OCI-LY7 (cell line): ENCODE measurements at regions of chr9 and their contacts with region 1.

Region 1: GRCh38 chr9:71524996-71525580 is 243.2 kb downstream of the CEMIP2 start:
- DNase-seq: no peak
- H3K4me3 ChIP-seq: no peak overlapping the region
- H3K27ac ChIP-seq: no peak overlapping the region
- H3K4me1 ChIP-seq: no peaks in the 10 kb centered on the region
- CTCF ChIP-seq: no peak

Region 2: GRCh38 chr9:71285191-71285656 is 239.9 kb before region 1 on chr9:
- CTCF ChIA-PET with region 1: no interaction called
- POLR2A ChIA-PET with region 1: no interaction called
- intact Hi-C with region 1: loop called (anchors 10 kb)
- DNase-seq: peak; percentile 63
- H3K4me3 ChIP-seq: no peak overlapping the region
- H3K27ac ChIP-seq: no peak overlapping the region
- H3K4me1 ChIP-seq: no peaks in the 10 kb centered on the region
- CTCF ChIP-seq: peak; percentile 91

Region 3: GRCh38 chr9:71496310-71496709 is 28.8 kb before region 1 on chr9:
- CTCF ChIA-PET with region 1: no interaction called
- POLR2A ChIA-PET with region 1: no interaction called
- intact Hi-C with region 1: no loop called
- DNase-seq: no peak
- H3K4me3 ChIP-seq: no peak overlapping the region
- H3K27ac ChIP-seq: no peak overlapping the region
- H3K4me1 ChIP-seq: no peaks in the 10 kb centered on the region
- CTCF ChIP-seq: no peak

Region 4: DNA sequence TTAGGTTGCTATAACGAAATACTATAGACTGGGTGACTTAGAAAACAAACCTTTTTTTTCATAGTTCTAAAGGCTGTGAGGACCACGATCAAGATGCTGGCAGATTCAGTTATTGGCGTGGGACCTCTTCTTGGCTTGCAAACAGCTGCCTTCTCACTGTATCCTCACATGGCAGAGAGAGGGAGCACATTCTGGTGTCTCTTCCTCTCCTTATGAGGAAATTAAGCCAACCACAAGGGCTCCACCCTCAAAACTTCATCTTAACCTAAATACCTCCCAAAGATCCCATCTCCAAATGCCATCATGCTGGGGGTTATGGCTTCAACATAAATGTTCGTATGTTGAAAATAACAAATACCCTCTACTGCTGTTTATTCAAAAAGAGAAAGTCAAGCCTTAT is 46.1 kb after region 1 on chr9:
- CTCF ChIA-PET with region 1: no interaction called
- POLR2A ChIA-PET with region 1: no interaction called
- intact Hi-C with region 1: no loop called
- DNase-seq: no peak
- H3K4me3 ChIP-seq: no peak overlapping the region
- H3K27ac ChIP-seq: no peak overlapping the region
- H3K4me1 ChIP-seq: no peaks in the 10 kb centered on the region
- CTCF ChIP-seq: no peak

Region 5: DNA sequence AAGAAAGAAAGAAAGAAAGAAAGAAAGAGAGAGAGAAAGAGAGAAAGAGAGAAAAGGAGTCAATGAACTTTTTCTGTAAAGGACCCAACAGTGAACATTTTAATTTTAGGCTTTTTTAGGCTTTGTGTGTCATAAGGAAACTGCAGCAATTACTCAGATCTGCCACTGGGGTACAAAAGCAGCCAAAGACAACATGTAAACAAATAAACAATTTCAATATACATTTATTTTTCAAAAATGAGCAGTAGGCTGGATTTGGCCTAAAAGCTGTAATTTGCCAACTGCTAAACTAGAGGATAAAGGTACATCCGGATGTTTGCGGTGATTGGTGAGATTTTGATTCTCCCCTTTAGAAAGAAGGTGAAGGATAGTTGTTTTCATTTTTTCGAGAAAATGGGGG is 99.6 kb after region 1 on chr9:
- CTCF ChIA-PET with region 1: no interaction called
- POLR2A ChIA-PET with region 1: no interaction called
- intact Hi-C with region 1: no loop called
- DNase-seq: no peak
- H3K4me3 ChIP-seq: no peak overlapping the region
- H3K27ac ChIP-seq: no peak overlapping the region
- H3K4me1 ChIP-seq: no peaks in the 10 kb centered on the region
- CTCF ChIP-seq: no peak; the same call in 1 of the 2 replicates